ENCODE measurements at regions of chr4 and their contacts with region 1.

Region 1: DNA sequence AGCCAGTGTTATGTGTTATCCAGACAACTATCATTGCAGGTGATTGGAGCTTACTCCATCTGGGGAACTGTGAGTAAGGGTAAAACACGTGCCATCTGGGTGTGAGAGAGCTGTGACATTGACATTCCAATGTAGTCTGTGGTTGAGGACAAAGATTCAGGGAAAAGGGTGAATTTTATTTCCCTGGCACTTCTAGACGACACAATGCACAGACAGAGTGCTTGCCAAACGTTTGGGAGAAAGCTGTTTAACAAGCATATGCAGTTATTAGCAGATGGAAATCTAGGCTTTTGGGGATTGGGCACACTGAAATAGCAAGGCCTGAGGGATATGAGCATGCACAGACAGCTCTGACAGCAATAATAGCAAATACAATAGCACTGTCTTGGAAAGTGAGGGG is 21.3 kb upstream of the CTSO start:
- DNase-seq: no peak
- H3K4me3 ChIP-seq: no peak overlapping the region
- H3K27ac ChIP-seq: no peak overlapping the region
- H3K4me1 ChIP-seq: no peaks in the 10 kb centered on the region
- H3K27me3 ChIP-seq: no peaks in the 10 kb centered on the region
- CTCF ChIP-seq: no peak
- POLR2A ChIP-seq: no peak

Region 2: GRCh38 chr4:155079871-155080270 is 895.1 kb before region 1 on chr4:
- intact Hi-C with region 1: loop called (anchors 5 kb)
- DNase-seq: no peak
- H3K4me3 ChIP-seq: no peak overlapping the region
- H3K27ac ChIP-seq: no peak overlapping the region
- H3K4me1 ChIP-seq: no peaks in the 10 kb centered on the region
- H3K27me3 ChIP-seq: no peaks in the 10 kb centered on the region
- CTCF ChIP-seq: no peak
- POLR2A ChIP-seq: no peak

Measured in vagina (tissue), 2 donors.